ENCODE measurements at regions of chr14 and their contacts with region 1.

Region 1: DNA sequence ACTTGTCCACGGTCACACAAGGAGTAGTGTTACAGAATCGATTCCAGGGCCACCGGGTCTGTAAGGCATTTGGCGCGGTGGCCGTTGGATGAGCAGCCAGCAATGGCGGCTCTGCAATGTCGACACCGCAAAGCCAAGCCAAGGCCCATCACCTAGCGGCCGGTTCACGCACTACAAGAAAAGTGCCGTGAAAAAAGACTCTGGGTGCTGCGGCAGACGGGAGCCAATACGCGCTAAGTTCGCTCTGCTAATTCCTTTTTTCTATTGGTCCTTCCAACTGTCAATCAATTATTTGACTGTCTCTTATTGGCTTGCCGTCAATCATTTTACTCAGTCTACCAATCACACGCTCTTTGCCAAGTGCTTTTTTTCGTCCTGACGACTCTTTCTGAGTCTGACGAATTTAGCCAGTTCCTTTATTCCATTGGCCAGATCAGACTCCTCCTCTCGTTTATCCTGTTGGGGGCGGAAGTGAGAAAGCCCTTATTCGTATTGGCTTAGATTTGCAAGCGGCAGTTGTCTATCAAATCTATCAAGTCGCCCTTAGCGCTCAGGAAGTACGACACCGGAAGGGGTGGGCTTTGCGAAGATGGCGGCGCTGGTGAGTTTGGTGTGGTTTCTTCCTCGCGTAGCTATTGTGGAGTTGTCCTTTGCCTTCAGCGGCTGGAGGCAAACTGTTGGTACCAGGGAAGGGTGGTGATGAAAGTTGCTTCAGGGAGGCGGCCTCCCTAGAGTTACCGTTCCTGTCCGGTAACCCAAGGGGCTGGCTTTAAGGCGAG is at the start of gene NGDN:
- DNase-seq: peak; percentile 100
- H3K4me3 ChIP-seq: peak within 1 kb of the TSS; percentile 99
- H3K27ac ChIP-seq: peak within 1 kb of the TSS; percentile 81
- H3K27me3 ChIP-seq: peaks cover 2% of the 10 kb centered on the region
- CTCF ChIP-seq: peak; percentile 85
- polyA plus RNA-seq, gene NGDN: 43.3 and 49.8 TPM in 2 replicates

Region 2: GRCh38 chr14:23299211-23299957 is 169.9 kb before region 1 on chr14:
- CTCF ChIA-PET with region 1: no interaction called
- POLR2A ChIA-PET with region 1: no interaction called
- DNase-seq: no peak
- H3K4me3 ChIP-seq: no peak overlapping the region
- H3K27ac ChIP-seq: peak overlapping the region; percentile 21
- H3K27me3 ChIP-seq: no peaks in the 10 kb centered on the region
- CTCF ChIP-seq: peak; percentile 41; the same call in 1 of the 2 replicates

Region 3: DNA sequence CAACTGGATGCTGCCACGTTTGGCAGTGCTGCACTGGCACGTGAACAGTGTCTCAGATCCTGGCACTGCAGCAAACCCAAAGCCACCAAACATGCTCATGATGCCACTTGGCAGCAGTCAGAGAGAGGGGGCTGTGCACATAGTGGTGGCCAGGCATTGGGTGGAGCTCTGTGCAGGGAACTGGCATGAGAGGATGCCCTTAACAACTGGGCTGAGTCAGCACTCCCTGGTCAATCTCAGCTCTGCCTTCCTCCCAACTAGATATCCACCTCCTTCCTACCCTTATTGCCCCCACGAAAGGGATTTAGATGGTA is 45.3 kb after region 1 on chr14:
- CTCF ChIA-PET with region 1: interaction called, 11 read pairs
- POLR2A ChIA-PET with region 1: no interaction called
- DNase-seq: no peak
- H3K4me3 ChIP-seq: no peak overlapping the region
- H3K27ac ChIP-seq: no peak overlapping the region
- H3K27me3 ChIP-seq: no peaks in the 10 kb centered on the region
- CTCF ChIP-seq: no peak

Measured in AG04450 (cell line).